ENCODE measurements at regions of chr17 and their contacts with region 1.

Region 1: GRCh38 chr17:1573916-1574696 is 11.5 kb upstream of the PITPNA start:
- DNase-seq: peak; percentile 60
- ATAC-seq: peak; percentile 88
- H3K4me3 ChIP-seq: no peak overlapping the region
- H3K27ac ChIP-seq: peak overlapping the region; percentile 44
- H3K4me1 ChIP-seq: peaks cover 7 to 20% of the 10 kb centered on the region in 2 experiments; a peak in 3 of 4 replicates
- H3K27me3 ChIP-seq: no peaks in the 10 kb centered on the region
- CTCF ChIP-seq: peak; percentile 89 to 96 (median 95)
- POLR2A ChIP-seq: no peak
- RAD21 ChIP-seq: peak; percentile 97

Region 2: GRCh38 chr17:1251866-1252608 is 322.1 kb before region 1 on chr17:
- CTCF ChIA-PET with region 1: no interaction called
- POLR2A ChIA-PET with region 1: no interaction called
- RAD21 ChIA-PET with region 1: no interaction called
- intact Hi-C with region 1: no loop called
- DNase-seq: no peak
- ATAC-seq: no peak
- H3K4me3 ChIP-seq: no peak overlapping the region
- H3K27ac ChIP-seq: no peak overlapping the region
- H3K4me1 ChIP-seq: peaks cover 3 to 14% of the 10 kb centered on the region in 2 experiments; a peak in 2 of 4 replicates
- H3K27me3 ChIP-seq: no peaks in the 10 kb centered on the region
- CTCF ChIP-seq: no peak
- POLR2A ChIP-seq: no peak
- RAD21 ChIP-seq: no peak

Region 3: GRCh38 chr17:1541367-1541904 is 32.7 kb before region 1 on chr17:
- CTCF ChIA-PET with region 1: no interaction called
- POLR2A ChIA-PET with region 1: no interaction called
- RAD21 ChIA-PET with region 1: no interaction called
- intact Hi-C with region 1: no loop called
- DNase-seq: no peak
- ATAC-seq: no peak
- H3K4me3 ChIP-seq: no peak overlapping the region
- H3K27ac ChIP-seq: no peak overlapping the region
- H3K4me1 ChIP-seq: no peaks in the 10 kb centered on the region
- H3K27me3 ChIP-seq: no peaks in the 10 kb centered on the region
- CTCF ChIP-seq: no peak
- POLR2A ChIP-seq: no peak
- RAD21 ChIP-seq: no peak

Region 4: DNA sequence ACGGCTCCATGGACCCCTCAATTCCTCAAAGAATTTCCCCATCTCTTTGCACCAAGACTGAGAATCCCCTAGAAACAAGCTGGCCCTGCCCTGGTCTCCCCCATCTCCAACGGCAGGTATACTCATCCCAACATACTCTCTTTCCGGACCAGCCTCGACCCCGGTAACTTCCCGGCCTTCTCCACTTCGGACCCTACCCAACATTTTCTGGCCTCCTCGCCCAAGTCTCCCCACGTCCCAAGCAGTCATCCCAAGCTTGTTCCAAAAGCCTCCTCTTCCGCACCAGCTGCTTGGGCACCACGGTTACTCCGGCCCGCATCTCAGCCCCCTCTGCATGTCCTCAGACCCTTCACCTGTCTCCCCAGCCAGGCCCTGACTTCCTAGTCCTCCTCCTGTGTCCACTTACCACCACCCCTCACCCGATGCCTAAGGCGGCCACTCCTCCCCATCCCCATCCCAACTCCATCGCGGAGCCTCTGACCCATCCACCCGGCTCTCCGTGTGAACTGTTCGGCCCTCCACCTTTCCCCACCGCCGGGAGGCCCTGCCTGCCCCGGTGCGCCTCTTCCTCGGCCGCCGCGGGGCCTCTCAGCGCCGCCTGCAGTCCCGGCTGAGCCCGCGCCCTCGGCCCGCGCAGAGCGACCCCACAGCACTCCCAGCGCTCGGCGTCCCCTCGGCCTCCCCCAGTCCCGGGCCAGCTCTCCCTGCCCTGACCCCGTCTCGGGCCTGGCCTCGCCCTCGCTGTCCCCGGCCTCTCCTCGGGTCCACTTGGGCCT is 12.5 kb before region 1 on chr17:
- CTCF ChIA-PET with region 1: interaction called, 16 read pairs
- POLR2A ChIA-PET with region 1: interaction called, 3 read pairs
- RAD21 ChIA-PET with region 1: interaction called in 1 of 2 experiments, 3 read pairs
- intact Hi-C with region 1: no loop called
- DNase-seq: no peak
- ATAC-seq: peak; percentile 37
- H3K4me3 ChIP-seq: peak overlapping the region; percentile 71 to 82
- H3K27ac ChIP-seq: peak overlapping the region; percentile 67; the same call in 1 of the 2 replicates
- H3K4me1 ChIP-seq: peaks cover 5 to 22% of the 10 kb centered on the region in 2 experiments; a peak in 3 of 4 replicates
- H3K27me3 ChIP-seq: no peaks in the 10 kb centered on the region
- CTCF ChIP-seq: 0 out of 6 replicates have a peak, but pooled peaks of 1 of the 3 experiments have one; percentile 7
- POLR2A ChIP-seq: no peak
- RAD21 ChIP-seq: no peak

Region 5: DNA sequence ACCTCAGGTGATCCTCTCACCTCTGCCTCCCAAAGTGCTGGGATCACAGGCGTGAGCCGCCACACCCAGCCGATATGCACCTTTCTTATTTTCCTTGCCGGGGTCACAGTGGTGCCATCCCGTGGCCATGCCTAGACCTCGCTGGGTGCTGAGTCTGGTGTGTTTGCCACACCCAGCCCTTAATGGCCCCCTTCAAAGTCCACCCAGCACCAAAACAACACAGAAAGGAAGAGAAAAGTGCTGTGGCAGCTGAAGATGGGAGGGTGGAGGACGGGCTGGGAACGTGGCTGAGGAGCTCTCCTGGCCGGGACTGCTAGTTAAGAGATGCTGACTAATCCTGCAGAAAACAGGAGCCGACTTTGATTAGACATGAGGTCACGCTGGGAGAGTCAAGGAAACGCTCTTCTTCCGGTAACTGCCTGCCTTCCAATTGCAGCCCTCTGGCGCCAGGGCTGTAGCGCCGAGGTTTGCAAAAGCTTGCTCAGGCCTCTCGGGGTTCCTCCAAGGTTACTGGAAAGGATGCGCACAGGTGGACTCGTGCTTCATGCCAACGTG is 43.6 kb after region 1 on chr17:
- CTCF ChIA-PET with region 1: interaction called, 41 read pairs
- POLR2A ChIA-PET with region 1: interaction called, 8 read pairs
- RAD21 ChIA-PET with region 1: interaction called, 7 to 11 read pairs
- intact Hi-C with region 1: no loop called
- DNase-seq: peak; percentile 93
- ATAC-seq: peak; percentile 89
- H3K4me3 ChIP-seq: peak overlapping the region; percentile 8 to 45; a peak in 3 of 4 replicates
- H3K27ac ChIP-seq: peak overlapping the region; percentile 95
- H3K4me1 ChIP-seq: peaks cover 41 to 48% of the 10 kb centered on the region in 2 experiments
- H3K27me3 ChIP-seq: no peaks in the 10 kb centered on the region
- CTCF ChIP-seq: peak; percentile 48 to 56 (median 52); a peak in 5 of 6 replicates
- POLR2A ChIP-seq: no peak
- RAD21 ChIP-seq: peak; percentile 55

Region 6: DNA sequence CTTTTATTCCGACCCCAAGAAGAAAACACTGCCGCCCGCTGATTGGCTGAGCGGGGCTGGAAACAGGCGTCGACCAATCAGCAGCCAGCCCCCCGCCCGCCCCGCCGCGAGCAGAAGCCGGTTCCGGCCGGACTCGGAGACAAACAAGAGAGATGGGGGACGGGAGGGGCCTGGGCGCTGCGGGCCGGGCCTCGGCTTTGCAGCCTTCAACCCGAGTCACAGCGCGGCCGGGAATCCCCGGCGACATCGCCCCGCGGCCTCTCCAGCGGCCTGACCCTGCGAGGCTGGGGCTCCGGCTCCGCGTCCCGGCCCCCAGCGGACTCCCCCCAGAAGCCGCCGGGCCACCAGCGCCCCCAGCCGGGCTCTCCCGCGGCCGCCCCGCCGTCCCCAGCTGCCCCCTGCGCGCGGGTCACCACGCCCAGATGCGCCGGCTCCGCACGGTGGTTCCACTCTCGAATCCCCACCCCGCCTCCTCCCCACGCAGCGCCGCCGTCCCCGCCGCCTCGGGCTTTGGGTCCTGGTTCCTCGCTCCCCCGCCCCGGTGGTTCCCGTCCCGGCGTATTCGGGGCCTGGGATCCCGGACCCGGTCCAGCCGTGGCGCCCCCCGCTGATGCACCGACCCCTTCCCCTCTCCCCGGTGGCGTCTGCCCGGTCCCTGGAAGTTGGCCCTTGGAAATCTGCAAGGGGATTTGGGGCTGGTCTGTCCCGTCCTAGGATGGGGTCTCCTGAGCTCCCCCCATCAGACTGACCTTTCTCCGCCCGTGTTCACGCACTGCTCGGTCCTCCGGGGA is 54.9 kb after region 1 on chr17:
- CTCF ChIA-PET with region 1: interaction called, 113 read pairs
- POLR2A ChIA-PET with region 1: interaction called, 5 read pairs
- RAD21 ChIA-PET with region 1: interaction called, 23 to 25 read pairs
- intact Hi-C with region 1: loop called (anchors 1 kb)
- DNase-seq: peak; percentile 82
- ATAC-seq: peak; percentile 81
- H3K4me3 ChIP-seq: peak overlapping the region; percentile 85 to 93
- H3K27ac ChIP-seq: peak overlapping the region; percentile 65
- H3K4me1 ChIP-seq: peaks cover 13 to 41% of the 10 kb centered on the region in 2 experiments
- H3K27me3 ChIP-seq: no peaks in the 10 kb centered on the region
- CTCF ChIP-seq: peak in 2 of 3 experiments; percentile 16 to 44; a peak in 1 of 6 replicates
- POLR2A ChIP-seq: no peak
- RAD21 ChIP-seq: no peak; the same call in none of the 2 replicates

Measured in HCT116 (cell line).